ENCODE measurements at regions of chr10 and their contacts with region 1.

Region 1: DNA sequence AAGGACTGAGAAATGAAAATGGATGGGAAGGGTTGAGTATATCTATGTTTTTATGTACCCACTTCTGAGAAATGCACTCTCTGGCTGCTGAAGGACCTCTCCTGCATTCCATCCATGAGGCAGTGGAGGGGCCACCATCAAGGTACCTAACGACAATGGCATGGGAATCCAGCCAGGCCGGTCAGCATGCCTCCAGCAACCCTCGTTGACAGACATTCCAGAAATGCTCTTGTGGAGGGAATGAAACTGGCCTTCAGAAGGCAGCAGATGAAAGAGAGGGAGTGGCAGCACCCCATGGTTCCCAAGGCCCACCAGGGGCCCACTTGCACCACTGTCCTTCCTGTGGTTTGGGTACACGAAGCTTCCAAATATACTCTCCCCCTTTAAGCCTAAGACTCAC is 269.0 kb downstream of the ARHGAP12 start:
- DNase-seq: no peak
- H3K4me3 ChIP-seq: no peak overlapping the region
- H3K27ac ChIP-seq: peak overlapping the region in 3 of 4 donors; percentile 83 to 90 (median 85)
- H3K4me1 ChIP-seq: peaks cover 0 to 75% (median 58%) of the 10 kb centered on the region in 4 donors
- H3K27me3 ChIP-seq: no peaks in the 10 kb centered on the region
- CTCF ChIP-seq: no peak
- EP300 ChIP-seq: no peak
- POLR2A ChIP-seq: no peak

Region 2: DNA sequence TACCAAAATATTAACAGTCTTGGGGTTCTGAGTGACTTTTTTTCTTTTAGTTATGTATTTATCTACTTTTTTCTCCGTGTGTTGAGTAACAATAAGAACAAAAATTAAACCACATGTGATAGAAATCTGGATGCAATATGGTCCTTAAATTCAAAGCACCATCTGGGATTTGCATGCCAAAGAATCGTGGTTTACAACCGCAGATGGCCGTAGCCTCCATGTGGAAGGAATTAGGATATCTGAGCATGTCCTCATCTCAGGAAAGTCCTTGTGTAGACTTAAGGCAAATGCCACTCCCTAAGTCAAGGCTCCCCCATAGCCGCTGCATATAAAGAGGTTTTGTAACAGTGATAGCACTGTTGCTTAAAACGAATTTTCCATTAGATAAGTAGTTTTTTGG is 36.7 kb before region 1 on chr10:
- intact Hi-C with region 1: loop called (anchors 2 kb)
- DNase-seq: peak; percentile 69
- H3K4me3 ChIP-seq: no peak overlapping the region
- H3K27ac ChIP-seq: peak overlapping the region; percentile 47 to 78 (median 66)
- H3K4me1 ChIP-seq: peaks cover 0 to 44% (median 35%) of the 10 kb centered on the region in 4 donors
- H3K27me3 ChIP-seq: no peaks in the 10 kb centered on the region
- CTCF ChIP-seq: peak; percentile 33 to 57 (median 46)
- EP300 ChIP-seq: no peak
- POLR2A ChIP-seq: no peak

Measured in sigmoid colon (tissue), 7 donors.